A673 (cell line): ENCODE measurements at regions of chr3 and their contacts with region 1.

Region 1: DNA sequence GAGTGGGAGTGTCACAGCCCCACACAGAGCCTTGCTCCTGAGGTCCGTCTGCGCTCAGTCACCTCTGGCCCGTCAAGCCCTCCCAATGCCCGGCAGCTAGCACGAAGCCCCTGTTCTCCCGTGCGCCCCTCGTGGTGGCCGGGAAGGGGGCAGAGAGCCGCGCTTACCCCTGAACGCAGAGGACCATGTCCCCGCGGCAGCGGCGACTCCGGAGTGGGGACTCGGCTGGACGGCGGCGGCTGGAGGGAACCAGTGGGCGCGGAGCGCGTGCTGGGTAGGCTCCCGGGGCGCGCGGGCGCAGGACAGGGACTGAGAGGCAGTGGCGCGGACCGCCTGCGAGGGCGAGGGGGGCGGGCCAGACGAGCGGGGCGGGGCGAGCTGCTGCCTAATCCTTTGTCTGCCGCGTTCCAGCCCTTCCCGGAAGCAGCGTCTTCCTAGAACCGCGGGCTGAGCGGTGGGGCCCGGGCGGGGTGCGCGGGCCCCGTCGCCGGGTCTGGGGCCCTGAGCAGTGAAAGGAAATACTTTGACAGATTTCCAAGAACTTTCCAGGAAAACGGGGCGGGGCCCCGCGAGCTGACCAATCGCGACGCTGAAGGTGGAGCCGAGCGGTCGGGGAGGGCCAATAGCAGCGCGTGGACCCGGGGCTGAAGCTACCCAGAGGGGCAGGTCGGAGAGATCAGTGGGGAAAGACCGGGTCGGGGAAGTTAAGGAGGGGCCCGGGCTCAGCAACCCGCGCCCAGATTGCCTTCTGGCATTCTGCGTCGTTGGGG is at the start of gene CISH:
- DNase-seq: peak; percentile 89
- H3K4me3 ChIP-seq: peak within 1 kb of the TSS; percentile 52
- H3K27ac ChIP-seq: peak within 1 kb of the TSS; percentile 67
- H3K4me1 ChIP-seq: peaks cover 8% of the 10 kb centered on the region
- H3K27me3 ChIP-seq: no peaks in the 10 kb centered on the region
- CTCF ChIP-seq: peak; percentile 44
- total RNA-seq, gene CISH: 0.86 and 1.6 TPM in 2 replicates

Region 2: GRCh38 chr3:50365080-50365841 is 246.4 kb before region 1 on chr3:
- CTCF ChIA-PET with region 1: no interaction called
- POLR2A ChIA-PET with region 1: no interaction called
- intact Hi-C with region 1: loop called (anchors 5 kb)
- DNase-seq: peak; percentile 49
- H3K4me3 ChIP-seq: peak overlapping the region; percentile 45
- H3K27ac ChIP-seq: no peak overlapping the region
- H3K4me1 ChIP-seq: no peaks in the 10 kb centered on the region
- H3K27me3 ChIP-seq: no peaks in the 10 kb centered on the region
- CTCF ChIP-seq: no peak

Region 3: DNA sequence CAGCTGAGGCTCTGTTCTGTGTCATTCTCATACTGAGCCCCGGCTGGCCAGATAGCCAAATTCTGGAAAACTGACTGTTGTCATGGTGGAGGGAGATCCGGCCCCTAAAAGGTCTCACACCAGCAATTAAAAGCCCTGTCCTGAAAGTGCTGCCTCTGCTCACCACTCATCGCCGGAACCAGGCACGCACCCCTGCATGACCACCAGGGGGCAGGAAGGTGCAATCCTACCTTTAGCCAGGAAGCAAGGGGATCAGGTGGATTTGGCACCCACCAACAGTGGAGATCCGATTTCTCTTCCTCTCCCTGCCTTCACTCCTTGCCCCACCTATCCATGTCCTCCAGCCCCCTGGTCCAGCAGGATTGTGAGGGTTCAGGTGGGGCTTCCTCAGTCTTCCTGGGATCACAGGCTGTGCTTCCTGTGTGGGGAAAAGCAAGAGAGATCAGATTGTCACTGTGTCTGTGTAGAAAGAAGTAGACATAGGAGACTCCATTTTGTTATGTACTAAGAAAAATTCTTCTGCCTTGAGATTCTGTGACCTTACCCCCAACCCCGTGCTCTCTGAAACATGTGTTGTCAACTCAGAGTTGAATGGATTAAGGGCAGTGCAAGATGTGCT is 92.1 kb before region 1 on chr3:
- CTCF ChIA-PET with region 1: no interaction called
- POLR2A ChIA-PET with region 1: no interaction called
- intact Hi-C with region 1: loop called (anchors 5 kb)
- DNase-seq: peak; percentile 28
- H3K4me3 ChIP-seq: no peak overlapping the region
- H3K27ac ChIP-seq: no peak overlapping the region
- H3K4me1 ChIP-seq: no peaks in the 10 kb centered on the region
- H3K27me3 ChIP-seq: no peaks in the 10 kb centered on the region
- CTCF ChIP-seq: peak; percentile 71

Region 4: DNA sequence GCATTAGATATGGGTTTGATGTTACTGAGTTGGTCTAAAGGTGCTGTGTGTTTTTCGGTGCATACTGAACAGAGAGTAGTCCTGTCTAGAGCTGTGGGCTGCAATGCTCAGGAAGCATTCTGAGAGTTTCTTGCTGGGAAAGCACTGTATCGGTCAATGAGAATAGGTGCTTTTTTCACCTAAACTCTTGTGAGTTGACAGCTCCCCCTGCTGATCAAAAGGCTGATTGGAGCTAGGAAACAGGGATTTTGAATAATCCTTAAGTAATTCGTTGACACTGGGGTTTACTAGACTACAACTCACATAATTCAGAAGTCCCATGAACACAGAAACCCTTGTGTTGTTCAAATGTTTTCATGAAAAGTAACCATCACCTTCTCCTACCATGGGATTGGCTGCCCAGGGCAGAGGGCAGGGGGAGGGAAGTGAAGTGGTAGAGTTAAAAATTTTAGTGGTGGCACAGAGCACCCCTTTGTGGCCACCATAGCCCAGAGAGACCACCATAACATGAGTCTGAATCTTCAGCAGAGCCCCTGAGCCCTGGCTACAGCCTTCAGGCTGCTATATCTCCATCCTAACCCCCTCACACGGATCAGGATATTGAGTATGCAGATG is 760.4 kb after region 1 on chr3:
- CTCF ChIA-PET with region 1: interaction called, 6 read pairs
- POLR2A ChIA-PET with region 1: no interaction called
- intact Hi-C with region 1: loop called (anchors 2 kb)
- DNase-seq: peak; percentile 61
- H3K4me3 ChIP-seq: no peak overlapping the region
- H3K27ac ChIP-seq: no peak overlapping the region
- H3K4me1 ChIP-seq: no peaks in the 10 kb centered on the region
- H3K27me3 ChIP-seq: no peaks in the 10 kb centered on the region
- CTCF ChIP-seq: peak; percentile 51

Region 5: GRCh38 chr3:51498876-51499738 is 887.5 kb after region 1 on chr3:
- CTCF ChIA-PET with region 1: no interaction called
- POLR2A ChIA-PET with region 1: no interaction called
- intact Hi-C with region 1: loop called (anchors 10 kb)
- DNase-seq: peak; percentile 89
- H3K4me3 ChIP-seq: peak overlapping the region; percentile 67
- H3K27ac ChIP-seq: peak overlapping the region; percentile 94
- H3K4me1 ChIP-seq: no peaks in the 10 kb centered on the region
- H3K27me3 ChIP-seq: no peaks in the 10 kb centered on the region
- CTCF ChIP-seq: no peak